ENCODE measurements at regions of chr1 and their contacts with region 1.

Region 1: GRCh38 chr1:213374369-213374768 is 323.3 kb downstream of the RPS6KC1 start:
- DNase-seq: no peak
- H3K4me3 ChIP-seq: no peak overlapping the region
- H3K27ac ChIP-seq: no peak overlapping the region
- H3K4me1 ChIP-seq: no peaks in the 10 kb centered on the region
- H3K27me3 ChIP-seq: no peaks in the 10 kb centered on the region
- CTCF ChIP-seq: peak; percentile 62 to 83 (median 82)

Region 2: DNA sequence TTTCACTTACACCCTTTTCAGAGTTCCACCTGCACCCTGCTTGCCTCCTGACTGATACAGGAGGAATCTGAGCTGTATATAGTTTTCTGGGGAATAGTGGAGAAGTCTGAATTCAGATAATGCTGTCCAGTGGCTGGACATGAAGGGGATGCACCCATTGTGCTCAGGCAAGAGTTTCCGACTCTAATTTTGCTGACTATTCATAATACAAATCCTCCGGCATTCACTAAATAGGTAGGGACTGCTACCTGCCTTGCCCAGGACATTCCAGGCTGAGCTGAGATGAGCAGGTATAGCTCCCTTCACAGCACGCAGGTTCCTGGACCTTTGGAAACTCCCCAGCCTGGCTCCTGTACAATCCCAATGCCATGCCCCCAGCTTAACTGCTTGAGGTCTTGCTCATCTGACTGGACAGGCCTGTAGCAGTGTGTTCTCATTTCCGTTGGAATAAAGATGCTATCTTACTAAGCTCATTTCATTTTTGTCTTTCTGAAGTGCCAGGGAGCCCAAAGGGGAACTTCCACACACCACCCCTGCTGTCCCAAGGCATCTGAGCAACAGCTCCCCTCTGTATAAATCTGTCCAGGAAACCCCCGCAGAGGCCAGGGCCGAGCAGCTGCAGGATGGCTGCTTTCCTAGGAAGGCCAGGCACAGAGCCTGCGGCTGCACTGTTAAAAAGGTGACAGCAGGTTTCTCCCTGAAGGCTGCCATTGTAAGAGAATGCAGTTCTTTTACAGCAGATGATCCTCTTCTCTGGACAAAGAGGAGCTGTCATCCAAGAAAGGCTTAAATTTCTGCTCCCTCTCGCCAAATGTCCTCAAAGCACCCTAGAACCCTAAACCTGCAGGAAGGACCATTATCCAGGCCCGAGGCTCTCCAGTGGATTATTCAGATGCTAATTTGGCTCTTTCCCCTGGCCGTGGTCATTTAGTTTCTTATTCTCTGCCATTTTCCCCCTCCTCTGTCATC is 445.8 kb before region 1 on chr1:
- dilution Hi-C with region 1: no loop called
- DNase-seq: no peak
- H3K4me3 ChIP-seq: no peak overlapping the region
- H3K27ac ChIP-seq: no peak overlapping the region
- H3K4me1 ChIP-seq: no peaks in the 10 kb centered on the region
- H3K27me3 ChIP-seq: peaks cover 5% of the 10 kb centered on the region
- CTCF ChIP-seq: no peak

Region 3: GRCh38 chr1:214123061-214123784 is 748.9 kb after region 1 on chr1:
- dilution Hi-C with region 1: loop called (anchors 10 kb)
- DNase-seq: no peak
- H3K4me3 ChIP-seq: no peak overlapping the region
- H3K27ac ChIP-seq: no peak overlapping the region
- H3K4me1 ChIP-seq: no peaks in the 10 kb centered on the region
- H3K27me3 ChIP-seq: no peaks in the 10 kb centered on the region
- CTCF ChIP-seq: peak; percentile 65 to 75 (median 68)

Measured in keratinocyte (primary cell).